ENCODE measurements at regions of chr1 and their contacts with region 1.

Region 1: DNA sequence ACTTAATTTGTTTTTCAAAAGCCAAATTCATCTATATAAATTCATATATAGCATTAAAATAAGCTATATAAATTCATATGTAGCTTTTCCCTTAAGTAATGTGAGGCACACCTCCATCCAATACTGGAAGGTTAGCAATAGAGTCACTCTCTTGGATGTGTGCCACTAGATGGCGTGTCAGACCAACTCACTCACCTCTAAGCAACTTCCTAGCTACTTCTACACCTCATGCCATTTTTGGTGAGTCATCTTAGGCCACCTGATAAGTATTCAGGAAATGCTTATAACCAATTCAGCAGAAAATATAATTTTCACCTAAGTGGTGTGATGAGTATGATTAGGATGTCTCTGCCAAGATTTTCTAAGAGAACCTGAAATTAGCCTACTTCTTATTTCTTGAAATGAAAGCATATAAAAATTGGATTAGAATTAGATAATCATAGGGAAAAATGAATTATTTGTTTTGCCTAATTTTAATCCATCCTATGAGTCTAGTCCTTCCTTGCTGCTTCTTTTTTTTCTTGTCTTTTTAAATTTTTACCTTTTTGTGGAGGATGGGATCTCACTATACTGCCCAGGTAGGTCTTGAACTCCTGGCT is 34.4 kb upstream of the TADA1 start:
- DNase-seq: peak; percentile 70
- ATAC-seq: peak; percentile 99
- H3K4me3 ChIP-seq: no peak overlapping the region
- H3K27ac ChIP-seq: no peak overlapping the region
- H3K4me1 ChIP-seq: peaks cover 5% of the 10 kb centered on the region; the same call in 1 of the 2 replicates
- H3K27me3 ChIP-seq: no peaks in the 10 kb centered on the region
- CTCF ChIP-seq: peak; percentile 81 to 92 (median 85)
- EP300 ChIP-seq: no peak
- POLR2A ChIP-seq: no peak
- RAD21 ChIP-seq: peak; percentile 94

Region 2: DNA sequence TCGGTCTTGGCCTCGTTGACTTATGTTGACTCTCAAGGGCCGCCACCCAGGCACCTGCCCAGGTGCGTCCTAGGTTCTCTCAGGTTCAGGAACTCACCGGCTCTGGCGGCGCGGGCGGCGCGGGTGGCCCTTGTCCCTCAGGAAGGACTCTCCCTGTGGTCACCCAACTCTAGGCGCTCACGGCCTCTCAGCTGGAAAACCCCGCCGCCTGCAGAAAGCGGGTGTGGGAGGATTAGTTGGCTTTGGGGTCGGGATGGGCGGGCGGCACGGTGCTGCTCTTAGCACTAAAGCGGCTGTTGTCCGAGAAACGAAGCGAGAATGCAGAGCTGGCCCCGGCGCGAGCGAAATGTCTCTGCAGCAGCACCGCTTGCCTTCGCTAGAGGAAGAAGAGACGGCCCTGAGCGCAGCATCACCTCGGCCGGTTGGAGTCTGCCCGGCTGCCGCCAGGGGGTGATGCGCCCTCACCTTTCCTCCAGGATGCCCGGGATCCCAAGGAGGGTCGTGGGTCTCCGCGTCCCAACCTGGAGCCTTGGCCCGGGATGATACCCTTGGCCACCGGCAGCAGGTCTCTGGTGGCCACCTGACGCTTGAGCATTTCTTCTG is 26.4 kb before region 1 on chr1:
- CTCF ChIA-PET with region 1: interaction called, 13 read pairs
- POLR2A ChIA-PET with region 1: no interaction called
- RAD21 ChIA-PET with region 1: interaction called, 4 read pairs
- SMC1A ChIA-PET with region 1: interaction called, 3 read pairs
- in situ Hi-C with region 1: no loop called
- intact Hi-C with region 1: no loop called
- DNase-seq: no peak
- ATAC-seq: peak; percentile 79
- H3K4me3 ChIP-seq: no peak overlapping the region
- H3K27ac ChIP-seq: no peak overlapping the region
- H3K4me1 ChIP-seq: peaks cover 7% of the 10 kb centered on the region; the same call in 1 of the 2 replicates
- H3K27me3 ChIP-seq: peaks cover 0 to 4% of the 10 kb centered on the region in 2 experiments; a peak in 1 of 4 replicates
- CTCF ChIP-seq: peak; percentile 35 to 66 (median 49)
- EP300 ChIP-seq: no peak
- POLR2A ChIP-seq: no peak
- RAD21 ChIP-seq: peak; percentile 44

Region 3: GRCh38 chr1:166920561-166921475 is 10.3 kb after region 1 on chr1:
- CTCF ChIA-PET with region 1: interaction called, 26 read pairs
- POLR2A ChIA-PET with region 1: no interaction called
- RAD21 ChIA-PET with region 1: interaction called, 4 read pairs
- SMC1A ChIA-PET with region 1: interaction called, 24 read pairs
- in situ Hi-C with region 1: no loop called
- intact Hi-C with region 1: no loop called
- DNase-seq: no peak
- ATAC-seq: peak; percentile 49; the same call in 2 of the 3 replicates
- H3K4me3 ChIP-seq: no peak overlapping the region
- H3K27ac ChIP-seq: no peak overlapping the region
- H3K4me1 ChIP-seq: peaks cover 6% of the 10 kb centered on the region; the same call in 1 of the 2 replicates
- H3K27me3 ChIP-seq: peaks cover 0 to 3% of the 10 kb centered on the region in 2 experiments; a peak in 2 of 4 replicates
- CTCF ChIP-seq: no peak
- EP300 ChIP-seq: no peak
- POLR2A ChIP-seq: no peak
- RAD21 ChIP-seq: no peak

Region 4: GRCh38 chr1:166937329-166937728 is 26.8 kb after region 1 on chr1:
- CTCF ChIA-PET with region 1: interaction called, 10 read pairs
- POLR2A ChIA-PET with region 1: interaction called, 3 read pairs
- RAD21 ChIA-PET with region 1: no interaction called
- SMC1A ChIA-PET with region 1: interaction called, 3 read pairs
- in situ Hi-C with region 1: no loop called
- intact Hi-C with region 1: no loop called
- DNase-seq: no peak
- ATAC-seq: no peak
- H3K4me3 ChIP-seq: no peak overlapping the region
- H3K27ac ChIP-seq: no peak overlapping the region
- H3K4me1 ChIP-seq: no peaks in the 10 kb centered on the region
- H3K27me3 ChIP-seq: peaks cover 0 to 2% of the 10 kb centered on the region in 2 experiments; a peak in 2 of 4 replicates
- CTCF ChIP-seq: no peak
- EP300 ChIP-seq: no peak
- POLR2A ChIP-seq: no peak
- RAD21 ChIP-seq: no peak

Region 5: GRCh38 chr1:167059045-167059808 is 148.7 kb after region 1 on chr1:
- CTCF ChIA-PET with region 1: interaction called, 734 read pairs
- POLR2A ChIA-PET with region 1: interaction called, 9 read pairs
- RAD21 ChIA-PET with region 1: interaction called, 305 read pairs
- SMC1A ChIA-PET with region 1: interaction called, 384 read pairs
- in situ Hi-C with region 1: loop called (anchors 5 kb)
- intact Hi-C with region 1: loop called (anchors 1 kb)
- DNase-seq: no peak
- ATAC-seq: peak; percentile 75
- H3K4me3 ChIP-seq: no peak overlapping the region
- H3K27ac ChIP-seq: no peak overlapping the region
- H3K4me1 ChIP-seq: 0 out of 2 replicates have a peak, but pooled peaks cover 3% of the 10 kb centered on the region
- H3K27me3 ChIP-seq: no peaks in the 10 kb centered on the region
- CTCF ChIP-seq: peak; percentile 87 to 90 (median 88)
- EP300 ChIP-seq: no peak
- POLR2A ChIP-seq: no peak
- RAD21 ChIP-seq: peak; percentile 85

Region 6: GRCh38 chr1:167121375-167122120 is 211.1 kb after region 1 on chr1:
- CTCF ChIA-PET with region 1: interaction called, 16 read pairs
- POLR2A ChIA-PET with region 1: no interaction called
- RAD21 ChIA-PET with region 1: no interaction called
- SMC1A ChIA-PET with region 1: interaction called, 5 read pairs
- in situ Hi-C with region 1: no loop called
- intact Hi-C with region 1: loop called (anchors 5 kb)
- DNase-seq: no peak
- ATAC-seq: peak; percentile 44
- H3K4me3 ChIP-seq: no peak overlapping the region
- H3K27ac ChIP-seq: no peak overlapping the region
- H3K4me1 ChIP-seq: no peaks in the 10 kb centered on the region
- H3K27me3 ChIP-seq: peaks cover 0 to 2% of the 10 kb centered on the region in 2 experiments; a peak in 1 of 4 replicates
- CTCF ChIP-seq: no peak
- EP300 ChIP-seq: no peak
- POLR2A ChIP-seq: no peak
- RAD21 ChIP-seq: no peak

Region 7: DNA sequence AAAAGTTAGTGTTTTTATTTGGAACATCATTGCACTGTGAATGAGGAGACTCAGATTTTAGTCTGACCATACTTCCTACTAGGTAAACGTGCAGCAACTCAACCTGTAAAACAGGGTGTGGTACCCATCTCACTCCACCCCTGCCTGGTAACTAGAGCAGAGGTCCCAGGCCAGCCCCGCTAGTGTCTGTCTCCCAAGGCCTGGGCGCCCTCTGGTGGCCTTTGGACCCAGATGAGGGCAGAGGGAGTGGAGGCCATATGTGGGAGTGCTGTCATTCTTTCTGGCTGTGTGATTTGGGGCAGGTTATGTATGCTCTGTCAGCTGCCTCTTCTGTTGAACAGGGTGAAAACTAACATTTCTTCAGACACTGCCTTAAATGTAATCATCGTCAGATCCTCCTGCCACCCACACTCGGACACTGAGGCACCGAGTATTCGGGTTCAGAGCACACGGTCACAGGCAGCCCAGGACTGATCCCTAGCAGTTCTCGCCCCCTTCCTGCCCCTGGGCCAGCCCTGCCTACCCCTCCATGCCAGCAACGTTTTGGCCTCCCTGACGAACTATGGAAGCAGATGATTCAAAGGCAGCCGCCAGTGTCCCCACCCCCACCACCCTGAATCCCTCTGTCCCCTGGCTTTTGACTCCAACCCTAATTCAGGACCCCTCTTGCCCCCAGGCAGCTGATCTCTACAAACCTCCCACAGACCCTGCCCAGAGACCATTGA is 531.8 kb after region 1 on chr1:
- CTCF ChIA-PET with region 1: interaction called, 7 read pairs
- POLR2A ChIA-PET with region 1: no interaction called
- RAD21 ChIA-PET with region 1: interaction called, 3 read pairs
- SMC1A ChIA-PET with region 1: no interaction called
- in situ Hi-C with region 1: loop called (anchors 10 kb)
- intact Hi-C with region 1: loop called (anchors 10 kb)
- DNase-seq: no peak
- ATAC-seq: peak; percentile 98
- H3K4me3 ChIP-seq: no peak overlapping the region
- H3K27ac ChIP-seq: no peak overlapping the region
- H3K4me1 ChIP-seq: peaks cover 8% of the 10 kb centered on the region
- H3K27me3 ChIP-seq: peaks cover 0 to 3% of the 10 kb centered on the region in 2 experiments; a peak in 1 of 4 replicates
- CTCF ChIP-seq: peak; percentile 92
- EP300 ChIP-seq: no peak
- POLR2A ChIP-seq: no peak
- RAD21 ChIP-seq: peak; percentile 98